HepG2 (cell line): ENCODE measurements at regions of chr17 and their contacts with region 1.

Region 1: DNA sequence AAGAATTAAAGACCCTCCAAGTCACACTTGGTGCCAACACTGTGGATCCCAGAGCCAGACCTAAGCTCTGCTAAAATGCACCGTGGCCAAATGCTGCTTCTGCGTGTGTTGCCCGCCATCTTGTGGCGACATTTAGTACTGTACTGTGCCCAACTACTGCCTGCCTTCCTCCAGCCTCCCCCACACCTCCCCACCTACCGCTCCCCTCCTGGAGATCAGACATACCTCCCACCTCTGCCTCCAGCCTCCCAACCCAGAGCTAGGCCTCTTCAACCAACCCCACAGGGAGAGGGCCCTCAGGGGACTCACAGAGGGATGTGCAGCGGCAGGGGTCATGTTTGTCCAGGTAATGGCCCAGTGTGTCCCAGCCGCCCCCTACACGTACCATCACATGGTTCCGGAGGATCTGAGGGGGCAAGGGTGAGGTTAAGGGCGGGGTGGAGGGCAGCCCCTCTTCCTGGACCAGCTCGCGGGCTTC is 5.5 kb downstream of the GAS2L2 start:
- DNase-seq: peak; percentile 54
- ATAC-seq: peak; percentile 80
- H3K4me3 ChIP-seq: peak overlapping the region in 1 of 3 experiments; percentile 4; a peak in 1 of 6 replicates
- H3K27ac ChIP-seq: no peak overlapping the region
- H3K4me1 ChIP-seq: peaks cover 21% of the 10 kb centered on the region
- H3K27me3 ChIP-seq: peaks cover 3 to 62% of the 10 kb centered on the region in 2 experiments; a peak in 4 of 5 replicates
- CTCF ChIP-seq: peak; percentile 96
- EP300 ChIP-seq: no peak
- POLR2A ChIP-seq: no peak
- RAD21 ChIP-seq: peak; percentile 91

Region 2: DNA sequence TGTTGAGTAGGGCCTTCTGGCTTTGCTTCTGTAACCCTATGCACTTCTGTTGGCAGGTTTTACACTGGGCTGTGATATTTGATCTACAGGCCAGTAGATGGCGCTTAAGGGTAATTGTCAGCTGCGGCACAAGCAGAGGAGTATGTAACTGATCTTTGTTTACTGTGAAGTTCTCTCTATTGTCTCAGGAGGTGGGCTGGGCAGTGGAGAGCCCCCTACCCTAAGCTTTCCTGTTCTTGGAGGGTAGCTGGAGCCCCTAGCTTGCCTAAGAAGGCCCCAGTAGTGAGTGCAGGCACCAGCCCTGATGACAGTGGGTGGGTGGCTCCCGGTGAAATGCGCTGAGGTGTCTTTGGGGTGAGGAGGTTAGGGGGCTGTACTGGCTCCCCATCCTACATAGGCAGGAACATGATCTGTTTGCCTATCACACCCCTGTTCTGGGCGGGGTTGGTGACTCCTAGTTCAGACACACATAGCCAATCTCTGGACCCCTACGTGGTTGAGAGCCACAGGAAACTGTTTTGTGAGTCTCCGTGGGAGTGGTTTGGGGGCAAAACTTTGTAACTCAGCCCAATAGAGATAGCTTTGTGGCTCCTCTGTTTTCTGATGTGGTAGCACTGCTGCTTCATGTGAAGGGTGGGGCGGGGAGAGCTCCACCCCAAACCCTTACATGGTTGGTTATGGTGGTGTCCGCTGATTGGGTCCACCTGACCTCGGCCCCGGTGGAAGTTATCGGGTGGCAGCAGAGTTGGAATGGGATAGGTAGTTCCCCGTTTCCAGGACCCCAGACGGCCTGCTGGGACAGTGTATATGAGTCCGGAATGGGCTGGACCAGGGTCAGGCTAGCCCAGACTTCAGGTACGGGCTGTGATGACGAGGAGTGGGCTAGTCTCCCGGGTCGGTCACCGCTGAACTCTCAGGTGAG is 434.5 kb before region 1 on chr17:
- CTCF ChIA-PET with region 1: interaction called, 4 read pairs
- POLR2A ChIA-PET with region 1: no interaction called
- in situ Hi-C with region 1: loop called (anchors 25 kb)
- intact Hi-C with region 1: no loop called
- DNase-seq: peak; percentile 43
- ATAC-seq: peak; percentile 92
- H3K4me3 ChIP-seq: no peak overlapping the region
- H3K27ac ChIP-seq: no peak overlapping the region
- H3K4me1 ChIP-seq: no peaks in the 10 kb centered on the region
- H3K27me3 ChIP-seq: no peaks in the 10 kb centered on the region; a peak in 1 of 5 replicates
- CTCF ChIP-seq: peak; percentile 82
- EP300 ChIP-seq: no peak
- POLR2A ChIP-seq: no peak
- RAD21 ChIP-seq: peak; percentile 56

Region 3: DNA sequence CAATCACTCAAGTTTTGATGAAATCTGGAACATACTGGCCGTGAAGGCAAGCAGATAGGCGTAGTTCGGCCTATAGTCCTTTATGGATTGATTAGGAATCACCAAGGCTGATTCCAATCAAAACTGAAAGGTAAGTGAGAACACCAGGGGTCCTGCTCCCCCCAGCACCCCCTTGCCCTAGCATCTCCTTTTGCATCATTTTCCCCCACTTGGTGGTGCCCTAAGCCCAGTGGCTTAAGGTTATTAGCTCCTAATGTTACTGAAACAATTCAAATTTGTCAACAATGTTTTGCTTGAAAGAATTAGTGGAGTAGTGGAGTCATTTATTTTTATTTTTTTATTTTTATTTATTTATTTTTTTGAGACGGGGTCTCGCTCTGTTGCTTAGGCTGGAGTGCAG is 191.9 kb before region 1 on chr17:
- CTCF ChIA-PET with region 1: no interaction called
- POLR2A ChIA-PET with region 1: no interaction called
- in situ Hi-C with region 1: loop called (anchors 10 kb)
- intact Hi-C with region 1: loop called (anchors 5 kb)
- DNase-seq: no peak
- ATAC-seq: no peak
- H3K4me3 ChIP-seq: no peak overlapping the region
- H3K27ac ChIP-seq: no peak overlapping the region
- H3K4me1 ChIP-seq: no peaks in the 10 kb centered on the region
- H3K27me3 ChIP-seq: peaks cover 5 to 9% of the 10 kb centered on the region in 2 experiments; a peak in 3 of 5 replicates
- CTCF ChIP-seq: peak; percentile 46
- EP300 ChIP-seq: no peak
- POLR2A ChIP-seq: no peak
- RAD21 ChIP-seq: no peak

Region 4: DNA sequence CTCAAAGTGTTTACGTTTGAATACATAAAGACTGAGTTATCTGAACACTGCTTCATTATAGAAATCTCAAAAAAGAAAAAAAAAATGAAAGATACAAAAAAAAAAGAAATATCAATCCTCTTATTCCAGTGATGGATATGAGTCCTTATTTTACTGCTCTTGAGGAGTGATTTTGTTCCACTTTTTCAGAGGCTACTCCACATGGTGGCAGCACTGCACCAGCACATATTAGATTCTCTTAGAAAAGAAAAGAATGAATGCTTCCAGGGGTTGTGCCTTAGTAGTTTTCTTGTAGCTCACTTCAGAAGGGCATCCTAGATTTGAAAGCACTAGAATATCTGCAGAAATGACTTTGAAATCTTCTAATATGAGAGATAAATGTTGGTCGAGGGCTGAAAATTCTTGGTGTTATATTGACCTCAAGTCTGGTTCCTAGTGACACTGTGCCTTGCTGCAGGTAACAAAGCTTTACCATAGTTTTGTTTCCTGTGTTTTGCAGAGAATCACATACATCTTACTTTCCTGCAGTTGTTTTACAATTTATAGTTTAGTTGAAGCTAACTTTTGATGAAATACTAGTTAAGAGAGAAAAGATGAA is 134.6 kb before region 1 on chr17:
- CTCF ChIA-PET with region 1: interaction called, 54 read pairs
- POLR2A ChIA-PET with region 1: interaction called, 3 read pairs
- in situ Hi-C with region 1: loop called (anchors 5 kb)
- intact Hi-C with region 1: loop called (anchors 1 kb)
- DNase-seq: peak; percentile 48
- ATAC-seq: no peak
- H3K4me3 ChIP-seq: no peak overlapping the region
- H3K27ac ChIP-seq: no peak overlapping the region
- H3K4me1 ChIP-seq: no peaks in the 10 kb centered on the region
- H3K27me3 ChIP-seq: no peaks in the 10 kb centered on the region
- CTCF ChIP-seq: peak; percentile 67
- EP300 ChIP-seq: no peak
- POLR2A ChIP-seq: no peak
- RAD21 ChIP-seq: peak; percentile 21; the same call in 1 of the 2 replicates